ENCODE measurements at regions of chr14 and their contacts with region 1.

Region 1: DNA sequence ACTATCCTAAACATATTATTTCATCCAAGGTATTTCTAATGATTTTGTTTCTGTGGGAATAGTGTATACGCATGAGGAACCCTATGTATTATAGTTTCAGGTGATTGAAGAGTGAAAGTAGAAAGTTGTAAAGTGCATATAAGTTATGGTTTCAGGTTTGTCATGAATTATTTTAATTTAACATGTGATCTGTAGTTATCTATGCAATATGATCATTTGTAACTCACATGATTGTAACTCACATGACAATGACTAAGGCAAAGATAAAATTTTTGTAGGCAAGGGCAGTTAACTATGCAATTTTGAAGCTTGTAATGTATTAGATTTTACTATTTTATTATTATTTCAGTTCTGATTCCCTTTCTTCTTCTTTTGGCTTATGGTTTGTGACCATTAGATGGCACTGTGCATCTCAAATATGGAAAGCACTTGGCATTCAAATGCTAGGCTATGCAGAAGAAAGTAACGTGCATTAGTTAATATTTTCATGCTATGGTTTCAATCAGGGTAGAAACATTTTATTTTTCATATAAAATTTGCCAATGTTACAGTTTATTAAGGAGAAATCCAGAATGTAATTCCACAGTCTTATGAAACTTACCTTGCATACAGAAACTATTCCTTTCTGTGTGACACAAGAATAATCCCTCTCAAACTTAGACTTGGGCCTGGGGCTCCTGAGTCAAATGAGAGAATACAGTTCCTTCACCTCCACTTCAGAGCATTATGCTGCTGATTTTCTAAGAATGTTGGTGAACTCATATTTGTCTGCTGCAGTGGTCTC is 15.8 kb upstream of the TMEM30B start:
- DNase-seq: no peak
- H3K4me3 Mint-ChIP-seq: no peak overlapping the region
- H3K27ac Mint-ChIP-seq: no peak overlapping the region
- H3K4me1 Mint-ChIP-seq: peaks cover 36% of the 10 kb centered on the region
- H3K27me3 Mint-ChIP-seq: no peaks in the 10 kb centered on the region

Region 2: DNA sequence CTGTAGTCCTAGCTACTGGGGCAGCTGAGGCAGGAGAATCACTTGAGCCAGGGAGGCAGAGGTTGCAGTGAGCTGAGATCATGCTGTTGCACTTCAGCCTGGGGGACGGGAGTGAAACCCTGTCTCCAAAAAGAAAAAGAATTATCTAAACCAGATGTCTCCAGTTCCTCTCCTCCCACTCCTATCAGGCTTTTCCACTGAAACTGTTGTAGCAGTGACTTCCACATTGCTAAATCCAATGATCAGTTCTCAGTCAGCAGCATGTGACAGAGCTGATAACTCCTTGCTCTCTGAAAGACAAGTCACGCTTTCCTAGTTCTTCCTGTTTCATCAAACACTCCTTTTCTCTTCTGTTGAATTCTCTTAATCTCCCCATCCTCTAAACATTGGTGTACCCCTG is 307.3 kb before region 1 on chr14:
- intact Hi-C with region 1: no loop called
- DNase-seq: no peak
- H3K4me3 Mint-ChIP-seq: no peak overlapping the region
- H3K27ac Mint-ChIP-seq: no peak overlapping the region
- H3K4me1 Mint-ChIP-seq: no peaks in the 10 kb centered on the region
- H3K27me3 Mint-ChIP-seq: no peaks in the 10 kb centered on the region

Region 3: GRCh38 chr14:61260939-61261776 is 35.8 kb before region 1 on chr14:
- intact Hi-C with region 1: no loop called
- DNase-seq: no peak
- H3K4me3 Mint-ChIP-seq: no peak overlapping the region
- H3K27ac Mint-ChIP-seq: no peak overlapping the region
- H3K4me1 Mint-ChIP-seq: no peaks in the 10 kb centered on the region
- H3K27me3 Mint-ChIP-seq: peaks cover 62% of the 10 kb centered on the region

Region 4: GRCh38 chr14:61321385-61322010 is 24.6 kb after region 1 on chr14 and contains the start of gene PRKCH:
- intact Hi-C with region 1: loop called (anchors 2 kb)
- DNase-seq: peak; percentile 81
- H3K4me3 Mint-ChIP-seq: peak within 1 kb of the TSS; percentile 98
- H3K27ac Mint-ChIP-seq: peak within 1 kb of the TSS; percentile 94
- H3K4me1 Mint-ChIP-seq: peaks cover 29% of the 10 kb centered on the region
- H3K27me3 Mint-ChIP-seq: no peaks in the 10 kb centered on the region
- total RNA-seq, gene PRKCH: 101 and 102 TPM in 2 replicates

Region 5: GRCh38 chr14:61822458-61822857 is 525.5 kb after region 1 on chr14:
- intact Hi-C with region 1: loop called (anchors 5 kb)
- DNase-seq: no peak
- H3K4me3 Mint-ChIP-seq: no peak overlapping the region
- H3K27ac Mint-ChIP-seq: no peak overlapping the region
- H3K4me1 Mint-ChIP-seq: peaks cover 3% of the 10 kb centered on the region
- H3K27me3 Mint-ChIP-seq: peaks cover 34% of the 10 kb centered on the region

Measured in activated T-helper 2 cell treated with anti-CD3 and anti-CD28 coated beads, Interferon-gamma antibody, Interleukin-2, Interleukin-4, amounts not matched to agents 10 μg/mL and 5 μg/mL and 100 μg/mL, durations not matched to agents 14 hours and 24 hours and 36 hours (primary cell).